ENCODE measurements at regions of chr10 and their contacts with region 1.

Region 1: DNA sequence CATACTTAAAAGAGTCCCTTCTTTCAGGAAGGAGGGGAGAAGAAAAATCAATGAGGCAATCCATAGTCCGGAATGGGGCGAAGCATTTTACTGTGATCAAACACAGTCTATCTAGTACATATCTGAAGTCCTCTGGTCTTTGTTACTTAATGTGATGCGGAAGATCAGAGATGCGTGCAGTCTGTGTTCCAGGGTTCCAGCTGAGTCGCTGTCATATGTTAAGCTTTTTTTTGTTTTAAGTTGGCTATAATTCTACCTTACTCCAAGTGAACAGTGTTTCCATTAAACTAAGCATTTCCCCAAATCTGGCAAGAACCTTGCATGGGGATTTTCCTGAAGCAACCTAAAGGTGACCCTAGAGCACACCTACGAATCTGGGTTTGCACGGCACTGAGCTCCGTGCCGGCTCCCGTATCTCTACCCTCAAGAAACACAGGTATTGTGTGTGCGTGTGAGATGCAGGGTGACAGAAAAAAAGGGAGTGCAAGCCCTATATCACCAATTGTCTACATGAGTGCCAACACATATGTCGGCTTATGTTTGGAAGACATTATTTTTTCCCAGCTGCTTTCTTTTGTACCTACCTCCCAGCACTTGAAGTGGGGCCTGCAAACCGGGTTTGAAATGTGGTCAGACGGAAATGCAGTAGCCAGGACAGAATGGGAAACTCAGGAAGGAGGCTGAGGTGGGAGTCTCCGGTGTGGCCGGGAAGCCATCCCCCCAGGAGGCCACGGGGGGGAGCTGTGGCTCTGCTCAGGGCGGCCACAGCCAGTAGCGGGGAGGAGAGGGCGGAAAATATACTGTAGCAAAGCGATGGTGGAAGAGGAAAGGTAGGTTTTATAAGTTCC is 435.8 kb upstream of the MGMT start:
- DNase-seq: peak; percentile 23
- H3K4me3 Mint-ChIP-seq: no peak overlapping the region
- H3K27ac Mint-ChIP-seq: no peak overlapping the region
- H3K4me1 Mint-ChIP-seq: peaks cover 13% of the 10 kb centered on the region
- H3K27me3 Mint-ChIP-seq: peaks cover 20% of the 10 kb centered on the region

Region 2: DNA sequence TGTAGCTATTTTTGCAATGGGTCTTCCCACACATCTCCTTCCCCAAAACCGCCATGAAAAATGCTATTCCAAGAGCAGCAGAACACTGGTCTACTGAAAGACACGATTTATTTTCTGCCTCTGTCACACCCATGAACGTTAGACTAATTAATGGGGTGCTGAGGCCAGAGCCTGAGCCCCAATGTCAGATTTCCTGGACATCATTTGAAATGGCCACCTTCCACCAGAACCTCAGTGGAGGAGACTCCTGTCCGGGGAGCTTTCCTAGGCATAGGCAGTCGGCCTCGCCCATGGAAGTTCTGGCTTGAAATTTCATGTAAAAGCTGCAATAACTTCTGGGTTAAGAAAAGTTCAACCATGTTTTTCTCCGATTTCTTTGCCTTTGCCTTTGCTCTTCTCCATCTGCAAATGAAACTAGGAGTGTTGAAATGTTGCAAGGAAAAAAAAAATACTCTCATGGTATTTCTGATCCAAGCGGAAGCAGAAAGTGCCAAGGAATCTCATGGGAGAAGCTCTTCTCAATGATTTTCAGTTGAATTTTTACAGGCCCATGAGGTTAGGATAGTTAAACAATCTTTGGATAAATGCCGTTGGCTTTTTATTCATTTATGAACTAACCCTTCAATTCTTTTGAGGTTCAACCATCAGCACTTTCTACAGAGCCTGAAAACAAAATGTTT is 135.0 kb before region 1 on chr10:
- intact Hi-C with region 1: no loop called
- DNase-seq: no peak
- H3K4me3 Mint-ChIP-seq: no peak overlapping the region
- H3K27ac Mint-ChIP-seq: no peak overlapping the region
- H3K4me1 Mint-ChIP-seq: no peaks in the 10 kb centered on the region
- H3K27me3 Mint-ChIP-seq: no peaks in the 10 kb centered on the region

Region 3: GRCh38 chr10:129004398-129004797 is 26.8 kb before region 1 on chr10:
- intact Hi-C with region 1: no loop called
- DNase-seq: no peak
- H3K4me3 Mint-ChIP-seq: no peak overlapping the region
- H3K27ac Mint-ChIP-seq: no peak overlapping the region
- H3K4me1 Mint-ChIP-seq: no peaks in the 10 kb centered on the region
- H3K27me3 Mint-ChIP-seq: peaks cover 4% of the 10 kb centered on the region

Region 4: GRCh38 chr10:129863201-129863663 is 832.0 kb after region 1 on chr10:
- intact Hi-C with region 1: loop called (anchors 10 kb)
- DNase-seq: no peak
- H3K4me3 Mint-ChIP-seq: no peak overlapping the region
- H3K27ac Mint-ChIP-seq: no peak overlapping the region
- H3K4me1 Mint-ChIP-seq: no peaks in the 10 kb centered on the region
- H3K27me3 Mint-ChIP-seq: no peaks in the 10 kb centered on the region

Region 5: GRCh38 chr10:129962872-129963640 is 931.8 kb after region 1 on chr10:
- intact Hi-C with region 1: loop called (anchors 5 kb)
- DNase-seq: no peak
- H3K4me3 Mint-ChIP-seq: peak overlapping the region; percentile 68
- H3K27ac Mint-ChIP-seq: peak overlapping the region; percentile 82
- H3K4me1 Mint-ChIP-seq: peaks cover 26% of the 10 kb centered on the region
- H3K27me3 Mint-ChIP-seq: peaks cover 53% of the 10 kb centered on the region

Region 6: GRCh38 chr10:129971381-129972144 is 940.3 kb after region 1 on chr10:
- intact Hi-C with region 1: loop called (anchors 5 kb)
- DNase-seq: no peak
- H3K4me3 Mint-ChIP-seq: peak overlapping the region; percentile 58
- H3K27ac Mint-ChIP-seq: peak overlapping the region; percentile 88
- H3K4me1 Mint-ChIP-seq: peaks cover 13% of the 10 kb centered on the region
- H3K27me3 Mint-ChIP-seq: peaks cover 38% of the 10 kb centered on the region

Measured in activated T-helper 1 cell treated with anti-CD3 and anti-CD28 coated beads, Interleukin-12 subunit alpha, Interleukin-12 subunit beta, Interleukin-2, Interleukin-4 antibody, amounts not matched to agents 30 ng/mL and 10 ng/mL and 1 ng/mL, durations not matched to agents 14 hours and 24 hours and 36 hours (primary cell).